Activated CD4-positive, alpha-beta T cell treated with anti-CD3 and anti-CD28 coated beads, Interleukin-2, amount 10 ng/mL, durations not matched to agents 7 days and 5 days (primary cell): ENCODE measurements at regions of chr22 and their contacts with region 1.

Region 1: DNA sequence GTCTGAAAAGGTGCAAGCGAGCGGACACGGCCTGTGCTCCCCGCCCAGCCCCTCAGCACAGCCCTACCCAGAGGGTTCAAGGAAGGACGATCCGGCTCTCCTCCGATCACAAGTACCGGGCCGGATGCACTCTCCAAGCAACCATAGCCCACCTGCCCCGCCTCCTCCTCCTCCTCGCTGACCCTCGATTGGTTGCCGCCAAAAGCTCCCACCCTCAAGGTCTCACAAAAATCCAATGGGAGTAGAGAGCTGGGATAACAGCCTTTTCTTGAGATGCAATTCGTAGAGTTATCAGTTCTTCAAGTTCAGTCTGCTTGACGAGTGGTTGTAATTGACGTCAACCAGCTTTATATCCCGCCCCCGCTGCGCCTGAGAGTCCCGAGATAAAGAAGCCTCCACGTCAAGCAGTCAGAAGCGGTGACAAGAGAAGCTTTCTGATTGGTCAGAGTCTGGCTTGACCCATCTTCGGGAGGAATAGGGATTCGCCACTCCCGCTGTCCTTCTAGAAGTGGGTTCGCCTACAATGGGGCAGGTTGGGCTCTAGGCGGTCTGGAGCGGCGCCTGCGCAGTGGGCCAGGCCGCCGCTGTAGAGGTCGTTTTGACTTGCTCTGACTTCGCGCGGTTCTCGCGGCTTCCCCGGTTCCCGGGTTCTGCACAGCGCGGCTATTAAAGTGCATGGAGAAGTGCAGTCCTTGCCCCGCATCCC is at the start of gene IFT27:
- DNase-seq: peak; percentile 99
- H3K4me3 Mint-ChIP-seq: peak within 1 kb of the TSS; percentile 88
- H3K27ac Mint-ChIP-seq: peak within 1 kb of the TSS; percentile 95
- H3K4me1 Mint-ChIP-seq: peaks cover 26% of the 10 kb centered on the region
- H3K27me3 Mint-ChIP-seq: no peaks in the 10 kb centered on the region
- total RNA-seq, gene IFT27: 20.7 to 29.0 TPM

Region 2: DNA sequence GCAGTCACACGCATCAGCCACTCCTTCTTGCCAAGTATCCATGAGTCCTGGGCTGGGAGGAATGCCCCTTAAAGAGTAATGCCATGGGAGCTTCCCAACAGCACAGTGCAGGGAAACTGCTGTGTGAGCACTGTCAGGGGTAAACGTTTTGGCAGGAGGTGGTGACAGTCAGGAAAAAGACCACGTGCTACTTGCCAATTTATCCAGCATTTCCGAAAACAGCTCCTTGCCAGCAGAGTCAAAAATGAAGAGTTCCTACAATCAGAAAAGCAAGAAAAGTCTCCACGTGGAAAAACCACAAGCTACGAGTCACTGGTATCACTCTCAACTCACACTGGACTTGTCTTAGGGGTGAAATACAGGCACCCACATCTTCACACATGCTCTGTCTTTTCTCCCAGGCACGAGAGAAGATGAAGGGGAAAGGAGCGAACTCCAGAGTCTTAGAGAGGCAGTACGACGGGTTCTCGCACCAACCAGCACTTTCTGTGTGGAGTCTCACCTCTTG is 10.1 kb before region 1 on chr22:
- CTCF ChIA-PET with region 1: interaction called, 11 read pairs
- POLR2A ChIA-PET with region 1: no interaction called
- DNase-seq: no peak
- H3K4me3 Mint-ChIP-seq: no peak overlapping the region
- H3K27ac Mint-ChIP-seq: no peak overlapping the region
- H3K4me1 Mint-ChIP-seq: no peaks in the 10 kb centered on the region
- H3K27me3 Mint-ChIP-seq: no peaks in the 10 kb centered on the region

Region 3: DNA sequence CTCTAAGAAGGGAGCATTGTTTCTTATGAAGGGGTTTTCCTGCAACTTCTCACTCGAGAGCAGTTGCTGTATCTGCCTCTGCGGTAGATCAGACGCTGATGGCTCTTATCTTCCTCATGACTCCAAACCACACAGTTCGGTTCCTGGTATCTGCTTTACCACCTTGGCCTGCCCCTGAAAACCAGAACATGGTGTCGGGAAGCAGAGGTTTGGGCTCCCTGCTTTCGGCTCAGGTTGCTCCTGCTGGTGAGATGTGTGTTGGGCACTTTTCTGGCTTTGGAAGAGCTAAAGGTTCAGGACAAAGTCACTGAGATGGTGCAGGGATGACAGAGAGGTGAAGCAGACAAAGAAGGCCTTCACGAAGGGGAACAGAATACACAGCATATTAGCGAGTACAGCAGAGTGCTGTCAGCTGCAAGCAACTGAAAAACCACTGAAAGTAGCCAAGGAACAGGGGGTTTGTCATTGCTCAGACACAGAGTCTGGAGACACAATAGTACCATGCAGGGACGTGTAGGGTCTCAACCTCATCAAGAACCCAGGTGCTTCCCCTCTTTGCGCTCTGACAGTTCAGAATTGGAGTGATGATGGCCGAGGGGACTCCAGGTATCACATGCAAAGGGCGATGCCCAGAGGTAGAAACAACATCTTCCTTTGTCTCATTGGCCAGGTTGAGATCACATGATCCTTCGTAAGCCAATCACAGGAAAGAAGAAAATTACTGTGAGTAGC is 125.5 kb after region 1 on chr22:
- CTCF ChIA-PET with region 1: no interaction called
- POLR2A ChIA-PET with region 1: no interaction called
- DNase-seq: peak; percentile 14
- H3K4me3 Mint-ChIP-seq: no peak overlapping the region
- H3K27ac Mint-ChIP-seq: peak overlapping the region; percentile 65
- H3K4me1 Mint-ChIP-seq: peaks cover 26% of the 10 kb centered on the region
- H3K27me3 Mint-ChIP-seq: peaks cover 23% of the 10 kb centered on the region

Region 4: GRCh38 chr22:36965696-36966095 is 189.6 kb after region 1 on chr22:
- CTCF ChIA-PET with region 1: no interaction called
- POLR2A ChIA-PET with region 1: no interaction called
- DNase-seq: no peak
- H3K4me3 Mint-ChIP-seq: no peak overlapping the region
- H3K27ac Mint-ChIP-seq: no peak overlapping the region
- H3K4me1 Mint-ChIP-seq: no peaks in the 10 kb centered on the region
- H3K27me3 Mint-ChIP-seq: peaks cover 15% of the 10 kb centered on the region